Naive thymus-derived CD4-positive, alpha-beta T cell (primary cell): ENCODE measurements at regions of chr9 and their contacts with region 1.

Region 1: GRCh38 chr9:101533334-101534107 is at the start of gene RNF20:
- DNase-seq: peak; percentile 96 to 100 (median 99)
- ATAC-seq: peak; percentile 95
- H3K4me3 ChIP-seq: peak within 1 kb of the TSS; percentile 96
- H3K4me3 Mint-ChIP-seq: peak within 1 kb of the TSS; percentile 89 to 98 (median 94)
- H3K27ac ChIP-seq: peak within 1 kb of the TSS; percentile 99
- H3K27ac Mint-ChIP-seq: peak within 1 kb of the TSS; percentile 93 to 99 (median 99)
- H3K4me1 ChIP-seq: peaks cover 20 to 24% of the 10 kb centered on the region in 2 donors
- H3K4me1 Mint-ChIP-seq: peaks cover 14 to 20% (median 18%) of the 10 kb centered on the region in 7 donors
- H3K27me3 ChIP-seq: no peaks in the 10 kb centered on the region
- H3K27me3 Mint-ChIP-seq: peaks cover 0 to 5% (median 4%) of the 10 kb centered on the region in 5 donors
- total RNA-seq, gene RNF20: 30.5 to 67.8 (median 45.9) TPM

Region 2: DNA sequence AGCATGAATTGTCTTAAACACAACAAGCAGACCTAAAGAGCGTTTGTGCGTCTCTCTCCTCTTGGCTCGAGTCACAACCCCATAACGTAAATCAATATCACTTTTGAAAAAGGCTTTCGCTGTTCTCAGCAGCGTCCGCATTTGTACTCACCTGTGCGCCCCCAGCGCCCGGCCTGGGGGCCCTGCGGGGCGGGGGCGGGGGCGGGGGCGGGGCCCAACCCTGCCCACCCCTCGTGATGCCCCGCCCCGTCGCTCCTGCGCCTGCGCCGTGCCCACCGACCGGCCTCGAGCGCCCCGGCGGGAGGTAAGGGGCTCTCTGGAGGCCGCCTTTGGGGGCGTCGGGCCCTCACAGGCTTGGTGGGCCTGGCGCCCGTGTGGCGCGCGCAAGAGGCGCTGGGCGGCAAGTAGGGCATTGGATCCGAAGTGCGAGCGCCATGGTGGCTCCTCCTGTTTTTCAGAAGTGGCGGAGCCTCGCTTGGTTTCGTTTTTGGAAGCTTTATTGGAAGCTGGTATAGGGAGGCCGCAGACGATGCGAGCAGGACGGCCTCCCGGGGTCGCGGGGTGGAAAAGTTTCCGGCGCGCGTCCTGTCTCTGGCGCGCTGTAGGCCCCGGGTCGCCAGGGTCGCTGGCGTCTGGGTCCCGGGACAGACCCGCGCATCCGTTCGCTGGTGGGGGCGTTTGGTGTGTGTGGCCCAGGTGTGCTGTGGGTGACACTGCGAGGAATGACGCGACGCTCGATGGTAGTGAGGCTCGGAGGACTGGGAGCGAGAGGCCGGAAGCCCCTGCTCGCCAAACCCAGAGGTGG is 1626.9 kb before region 1 on chr9 and contains the start of gene STX17:
- CTCF ChIA-PET with region 1: no interaction called
- POLR2A ChIA-PET with region 1: no interaction called
- intact Hi-C with region 1: loop called in 1 of 2 experiments (anchors 1 kb)
- DNase-seq: peak; percentile 78 to 94 (median 88)
- ATAC-seq: peak; percentile 90
- H3K4me3 ChIP-seq: peak within 1 kb of the TSS; percentile 96
- H3K4me3 Mint-ChIP-seq: peak within 1 kb of the TSS; percentile 92 to 99 (median 97)
- H3K27ac ChIP-seq: peak within 1 kb of the TSS; percentile 99
- H3K27ac Mint-ChIP-seq: peak within 1 kb of the TSS; percentile 96 to 100 (median 99)
- H3K4me1 ChIP-seq: peaks cover 14 to 17% of the 10 kb centered on the region in 2 donors
- H3K4me1 Mint-ChIP-seq: peaks cover 29 to 46% (median 40%) of the 10 kb centered on the region in 7 donors
- H3K27me3 ChIP-seq: no peaks in the 10 kb centered on the region
- H3K27me3 Mint-ChIP-seq: peaks cover 0 to 14% (median 7%) of the 10 kb centered on the region in 5 donors
- total RNA-seq, gene STX17: 34.2 to 63.2 (median 51.2) TPM

Region 3: GRCh38 chr9:100352727-100353505 is 1180.6 kb before region 1 on chr9 and contains the start of gene TEX10:
- CTCF ChIA-PET with region 1: no interaction called
- POLR2A ChIA-PET with region 1: no interaction called
- intact Hi-C with region 1: loop called (anchors 2 to 5 kb)
- DNase-seq: peak; percentile 80 to 94 (median 87)
- ATAC-seq: peak; percentile 96
- H3K4me3 ChIP-seq: peak within 1 kb of the TSS; percentile 79
- H3K4me3 Mint-ChIP-seq: peak within 1 kb of the TSS; percentile 87 to 99 (median 94)
- H3K27ac ChIP-seq: peak within 1 kb of the TSS; percentile 82
- H3K27ac Mint-ChIP-seq: peak within 1 kb of the TSS; percentile 77 to 94 (median 86)
- H3K4me1 ChIP-seq: peaks cover 8 to 22% of the 10 kb centered on the region in 2 donors
- H3K4me1 Mint-ChIP-seq: peaks cover 32 to 62% (median 53%) of the 10 kb centered on the region in 7 donors
- H3K27me3 ChIP-seq: no peaks in the 10 kb centered on the region
- H3K27me3 Mint-ChIP-seq: no peaks in the 10 kb centered on the region
- total RNA-seq, gene TEX10: 11.0 to 24.6 (median 18.2) TPM

Region 4: DNA sequence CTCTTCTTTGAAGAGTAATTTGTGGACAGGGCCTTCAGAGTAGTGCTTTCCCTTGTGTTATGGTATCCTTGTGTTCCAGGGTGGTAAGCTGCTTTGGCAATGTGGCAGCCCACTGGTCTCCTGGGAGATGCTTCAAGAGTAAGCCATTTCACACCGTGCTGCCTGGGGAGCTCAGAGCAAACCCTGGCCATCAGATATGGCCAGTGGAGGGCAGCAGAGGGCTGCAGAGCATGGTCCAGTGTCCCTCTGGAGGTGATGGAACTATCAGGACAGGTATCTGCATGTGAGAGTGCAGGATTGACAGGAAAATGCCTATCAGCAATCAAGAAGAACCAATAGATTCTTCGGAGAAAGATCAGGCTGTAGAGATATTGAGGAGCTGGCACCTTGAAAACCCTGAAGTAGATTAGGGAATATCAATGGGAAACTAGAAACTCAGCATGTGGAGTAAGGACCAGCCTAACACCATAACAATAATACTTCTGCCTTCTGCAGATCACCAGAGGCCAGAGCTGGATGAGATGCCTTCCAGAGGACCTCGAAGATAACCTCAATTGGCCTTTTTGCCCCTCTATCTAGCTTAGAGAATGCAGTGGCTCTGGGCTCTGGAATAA is 414.2 kb before region 1 on chr9:
- CTCF ChIA-PET with region 1: no interaction called
- POLR2A ChIA-PET with region 1: no interaction called
- intact Hi-C with region 1: loop called in 1 of 2 experiments (anchors 2 kb)
- DNase-seq: peak in 1 of 9 donors; percentile 21
- ATAC-seq: no peak
- H3K4me3 ChIP-seq: no peak overlapping the region
- H3K4me3 Mint-ChIP-seq: no peak overlapping the region
- H3K27ac ChIP-seq: no peak overlapping the region
- H3K27ac Mint-ChIP-seq: no peak overlapping the region
- H3K4me1 ChIP-seq: no peaks in the 10 kb centered on the region
- H3K4me1 Mint-ChIP-seq: no peaks in the 10 kb centered on the region
- H3K27me3 ChIP-seq: no peaks in the 10 kb centered on the region
- H3K27me3 Mint-ChIP-seq: peaks cover 0 to 10% (median 0%) of the 10 kb centered on the region in 5 donors

Region 5: GRCh38 chr9:101184813-101185278 is 348.7 kb before region 1 on chr9:
- CTCF ChIA-PET with region 1: no interaction called
- POLR2A ChIA-PET with region 1: no interaction called
- intact Hi-C with region 1: no loop called
- DNase-seq: no peak
- ATAC-seq: no peak
- H3K4me3 ChIP-seq: no peak overlapping the region
- H3K4me3 Mint-ChIP-seq: no peak overlapping the region
- H3K27ac ChIP-seq: no peak overlapping the region
- H3K27ac Mint-ChIP-seq: no peak overlapping the region
- H3K4me1 ChIP-seq: no peaks in the 10 kb centered on the region
- H3K4me1 Mint-ChIP-seq: no peaks in the 10 kb centered on the region
- H3K27me3 ChIP-seq: no peaks in the 10 kb centered on the region
- H3K27me3 Mint-ChIP-seq: peaks cover 0 to 4% (median 0%) of the 10 kb centered on the region in 5 donors

Region 6: DNA sequence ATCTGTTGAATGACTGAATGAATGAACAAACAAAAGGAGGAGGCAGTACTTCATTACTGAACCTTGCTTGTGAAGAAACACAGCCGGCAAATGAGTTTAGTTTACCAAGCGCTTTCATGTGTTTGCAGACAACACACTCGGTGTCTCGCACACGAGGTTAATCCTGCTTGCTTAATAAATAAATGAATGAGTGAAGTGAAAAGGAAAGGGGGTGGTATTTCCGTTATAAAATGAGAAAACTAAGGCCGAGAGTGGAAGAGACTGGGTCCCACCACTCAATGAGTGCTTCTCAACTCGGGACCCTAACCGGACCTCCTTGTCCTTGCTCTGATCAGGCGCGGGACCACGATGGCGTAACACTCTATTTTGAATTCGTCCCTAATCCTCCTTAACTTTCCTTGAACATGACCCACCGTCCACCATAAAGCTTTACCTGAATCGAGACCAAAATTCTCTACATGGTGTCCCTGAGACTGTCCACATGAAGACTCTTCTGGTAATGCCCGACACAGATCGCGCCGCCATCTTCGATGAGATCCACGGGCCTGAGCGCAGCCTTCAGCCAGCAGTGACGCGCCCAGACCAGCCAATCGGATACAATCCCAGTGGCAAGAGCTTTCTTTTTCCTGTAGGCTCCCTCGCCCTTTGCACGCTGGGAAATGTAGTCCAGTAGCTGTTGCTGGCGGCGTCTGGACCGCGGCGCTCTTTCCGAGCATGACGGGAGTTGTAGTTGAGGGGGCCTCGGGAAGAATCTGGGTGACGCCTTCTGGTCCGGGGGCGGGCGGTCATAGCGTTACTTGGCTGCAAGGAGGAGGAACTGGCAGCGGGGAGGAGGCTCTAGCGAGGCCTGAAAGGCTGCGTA is 135.2 kb before region 1 on chr9 and contains the starts of genes MRPL50 and ZNF189:
- CTCF ChIA-PET with region 1: interaction called, 4 read pairs
- POLR2A ChIA-PET with region 1: interaction called, 17 read pairs
- intact Hi-C with region 1: loop called (anchors 1 kb)
- DNase-seq: peak; percentile 81 to 99 (median 96)
- ATAC-seq: peak; percentile 97
- H3K4me3 ChIP-seq: peak within 1 kb of the TSS; percentile 90
- H3K4me3 Mint-ChIP-seq: peak within 1 kb of the TSS; percentile 93 to 100 (median 98)
- H3K27ac ChIP-seq: peak within 1 kb of the TSS; percentile 94
- H3K27ac Mint-ChIP-seq: peak within 1 kb of the TSS; percentile 97 to 100 (median 99)
- H3K4me1 ChIP-seq: peaks cover 21 to 34% of the 10 kb centered on the region in 2 donors
- H3K4me1 Mint-ChIP-seq: peaks cover 53 to 90% (median 83%) of the 10 kb centered on the region in 7 donors
- H3K27me3 ChIP-seq: no peaks in the 10 kb centered on the region
- H3K27me3 Mint-ChIP-seq: no peaks in the 10 kb centered on the region
- total RNA-seq, gene MRPL50: 6.5 to 23.8 (median 11.5) TPM
- total RNA-seq, gene ZNF189: 8.5 to 25.0 (median 14.5) TPM

Region 7: GRCh38 chr9:101458955-101459631 is 74.4 kb before region 1 on chr9:
- CTCF ChIA-PET with region 1: interaction called, 11 read pairs
- POLR2A ChIA-PET with region 1: no interaction called
- intact Hi-C with region 1: loop called (anchors 1 kb)
- DNase-seq: peak in 7 of 9 donors; percentile 9 to 49 (median 27)
- ATAC-seq: peak; percentile 84
- H3K4me3 ChIP-seq: no peak overlapping the region
- H3K4me3 Mint-ChIP-seq: no peak overlapping the region
- H3K27ac ChIP-seq: no peak overlapping the region
- H3K27ac Mint-ChIP-seq: no peak overlapping the region
- H3K4me1 ChIP-seq: no peaks in the 10 kb centered on the region
- H3K4me1 Mint-ChIP-seq: peaks cover 0 to 2% (median 0%) of the 10 kb centered on the region in 7 donors
- H3K27me3 ChIP-seq: no peaks in the 10 kb centered on the region
- H3K27me3 Mint-ChIP-seq: peaks cover 8 to 26% (median 17%) of the 10 kb centered on the region in 5 donors

Region 8: GRCh38 chr9:101586651-101587050 is 53.1 kb after region 1 on chr9:
- CTCF ChIA-PET with region 1: no interaction called
- POLR2A ChIA-PET with region 1: no interaction called
- intact Hi-C with region 1: loop called in 1 of 2 experiments (anchors 1 kb)
- DNase-seq: no peak
- ATAC-seq: no peak
- H3K4me3 ChIP-seq: no peak overlapping the region
- H3K4me3 Mint-ChIP-seq: no peak overlapping the region
- H3K27ac ChIP-seq: no peak overlapping the region
- H3K27ac Mint-ChIP-seq: peak overlapping the region in 2 of 9 donors; percentile 14
- H3K4me1 ChIP-seq: no peaks in the 10 kb centered on the region
- H3K4me1 Mint-ChIP-seq: peaks cover 0 to 16% (median 4%) of the 10 kb centered on the region in 7 donors
- H3K27me3 ChIP-seq: no peaks in the 10 kb centered on the region
- H3K27me3 Mint-ChIP-seq: peaks cover 0 to 3% (median 0%) of the 10 kb centered on the region in 5 donors